GM18951 (cell line): ENCODE measurements at regions of chr12 and their contacts with region 1.

Region 1: DNA sequence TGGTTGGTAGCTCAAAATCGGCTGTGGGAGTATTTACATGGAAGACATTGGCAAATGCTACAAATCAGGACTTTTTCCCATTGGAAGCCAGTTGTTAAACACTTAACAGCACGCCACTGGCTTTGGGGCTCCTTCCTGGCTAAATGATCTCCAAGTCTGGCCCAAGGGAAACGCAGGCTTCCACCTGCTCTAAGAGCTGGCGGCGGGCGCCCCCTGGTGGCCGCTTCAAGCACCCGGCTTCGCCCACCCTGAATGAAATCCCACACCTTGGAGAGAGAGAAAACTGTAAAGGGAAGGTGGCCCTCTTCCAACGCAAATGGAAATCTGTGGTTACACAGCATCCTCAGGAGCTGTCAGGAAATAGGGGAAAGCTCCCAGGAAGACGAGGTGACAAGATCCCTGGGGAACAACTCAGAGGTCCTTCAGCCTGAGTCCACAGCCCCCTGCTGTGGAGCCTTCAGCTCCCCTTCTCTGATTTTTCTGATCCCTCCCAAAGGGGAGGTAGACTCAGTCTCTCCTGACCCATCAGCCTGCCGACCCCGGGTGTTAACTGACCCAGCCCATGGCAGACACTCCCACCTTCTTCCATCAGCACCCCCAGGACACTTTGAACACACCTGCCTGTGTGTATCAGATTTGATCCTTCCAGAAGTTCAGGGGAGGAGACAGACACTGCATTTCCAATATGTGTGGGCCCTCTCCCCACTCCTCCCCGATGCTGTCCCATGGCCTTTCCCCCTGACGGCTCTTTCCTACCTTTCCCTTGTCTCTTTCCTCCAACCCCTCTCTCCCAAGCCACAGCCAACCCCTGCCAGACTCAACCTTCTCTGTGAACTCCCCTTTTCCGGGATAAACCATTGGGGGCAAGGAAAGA is 15.4 kb downstream of the SELPLG start:
- POLR2A ChIP-seq: no peak

Region 2: DNA sequence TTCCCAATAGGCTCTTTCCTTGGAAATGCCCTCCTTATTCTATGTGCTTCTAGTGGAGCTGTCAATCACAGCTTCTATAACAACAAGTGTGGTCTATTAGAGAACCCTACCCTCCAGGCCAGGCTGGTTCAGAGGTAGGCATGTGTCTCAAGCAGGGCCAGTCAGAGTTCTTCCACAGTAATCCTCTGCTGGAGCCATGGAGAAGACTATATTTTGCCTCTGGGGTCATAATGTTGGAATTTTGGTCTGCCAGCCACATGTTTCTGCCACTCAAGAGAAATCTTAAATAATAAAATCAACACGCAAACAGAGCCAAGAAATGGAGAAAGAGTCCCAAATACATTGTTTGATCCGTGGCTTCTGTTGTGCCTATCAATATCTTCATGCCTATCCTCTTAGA is 127.1 kb before region 1 on chr12:
- in situ Hi-C with region 1: no loop called
- POLR2A ChIP-seq: no peak

Region 3: DNA sequence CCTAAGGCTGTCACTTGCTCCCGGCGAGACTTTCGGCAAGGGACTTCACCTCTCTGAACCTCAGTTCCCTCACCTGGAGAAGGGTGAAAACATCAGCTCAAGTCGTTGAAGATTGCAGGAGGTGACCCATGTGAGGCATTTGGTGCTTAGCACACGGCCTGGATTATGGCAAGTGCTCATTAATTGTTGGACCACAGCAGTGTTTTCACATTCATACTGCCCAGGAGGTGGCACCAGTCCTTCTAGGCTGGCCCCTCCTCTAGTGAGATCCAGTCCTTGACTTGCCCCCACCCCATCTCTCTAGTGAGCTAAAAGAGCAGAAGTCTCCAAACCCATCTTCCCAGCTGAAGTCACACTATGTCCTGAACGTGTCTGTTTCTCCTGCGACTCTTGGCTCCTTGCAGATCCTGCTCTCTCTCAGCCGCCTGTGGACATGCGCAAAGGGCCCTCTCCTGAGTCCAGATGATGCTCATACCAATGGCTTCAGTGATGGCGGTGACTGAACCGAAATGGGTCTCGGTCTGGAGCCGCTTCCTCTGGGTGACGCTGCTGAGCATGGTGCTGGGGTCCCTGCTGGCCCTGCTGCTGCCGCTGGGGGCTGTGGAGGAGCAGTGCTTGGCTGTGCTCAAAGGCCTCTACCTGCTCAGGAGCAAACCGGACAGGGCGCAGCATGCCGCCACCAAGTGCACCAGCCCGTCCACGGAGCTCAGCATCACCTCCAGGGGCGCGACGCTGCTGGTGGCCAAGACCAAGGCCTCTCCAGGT is 101.6 kb before region 1 on chr12:
- in situ Hi-C with region 1: no loop called
- POLR2A ChIP-seq: no peak

Region 4: DNA sequence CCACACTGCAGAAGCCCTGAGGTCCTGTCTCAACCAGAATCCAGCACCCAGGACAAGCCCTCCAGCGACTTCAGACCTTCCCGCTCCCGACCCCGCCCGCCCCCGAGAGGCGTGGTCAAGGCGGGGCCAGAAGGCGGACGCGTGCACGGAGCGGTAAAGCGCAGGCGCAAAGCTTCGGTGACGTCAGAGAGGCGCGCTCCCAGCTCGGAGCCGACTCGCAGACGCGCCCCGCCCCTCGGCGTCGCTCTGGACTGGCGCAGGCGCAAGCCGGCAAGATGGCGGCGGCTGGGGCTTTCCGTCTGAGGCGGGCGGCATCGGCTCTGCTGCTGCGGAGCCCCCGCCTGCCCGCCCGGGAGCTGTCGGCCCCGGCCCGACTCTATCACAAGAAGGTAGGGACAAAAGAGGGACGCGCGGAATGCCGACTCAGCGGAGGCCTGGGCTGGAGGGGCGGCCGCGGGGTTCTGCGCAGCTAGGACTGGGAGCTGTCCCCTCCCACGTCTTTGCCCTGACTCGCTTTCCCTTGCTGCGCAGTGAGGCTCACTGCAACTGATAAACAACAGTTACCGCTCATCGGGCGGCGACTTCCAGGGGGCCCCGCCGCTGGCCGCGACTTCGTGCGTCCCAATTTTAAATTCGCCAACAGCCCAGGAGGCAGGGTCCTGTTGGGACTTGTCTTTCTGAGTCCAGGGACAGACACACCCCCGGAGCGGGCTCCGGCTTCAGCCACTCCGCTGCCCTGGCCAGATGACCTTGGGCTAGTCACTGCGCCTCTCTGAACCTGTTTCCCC is 55.8 kb before region 1 on chr12 and contains the start of gene ISCU:
- in situ Hi-C with region 1: loop called (anchors 5 kb)
- POLR2A ChIP-seq: peak; percentile 97